ENCODE measurements at regions of chr12 and their contacts with region 1.

Region 1: DNA sequence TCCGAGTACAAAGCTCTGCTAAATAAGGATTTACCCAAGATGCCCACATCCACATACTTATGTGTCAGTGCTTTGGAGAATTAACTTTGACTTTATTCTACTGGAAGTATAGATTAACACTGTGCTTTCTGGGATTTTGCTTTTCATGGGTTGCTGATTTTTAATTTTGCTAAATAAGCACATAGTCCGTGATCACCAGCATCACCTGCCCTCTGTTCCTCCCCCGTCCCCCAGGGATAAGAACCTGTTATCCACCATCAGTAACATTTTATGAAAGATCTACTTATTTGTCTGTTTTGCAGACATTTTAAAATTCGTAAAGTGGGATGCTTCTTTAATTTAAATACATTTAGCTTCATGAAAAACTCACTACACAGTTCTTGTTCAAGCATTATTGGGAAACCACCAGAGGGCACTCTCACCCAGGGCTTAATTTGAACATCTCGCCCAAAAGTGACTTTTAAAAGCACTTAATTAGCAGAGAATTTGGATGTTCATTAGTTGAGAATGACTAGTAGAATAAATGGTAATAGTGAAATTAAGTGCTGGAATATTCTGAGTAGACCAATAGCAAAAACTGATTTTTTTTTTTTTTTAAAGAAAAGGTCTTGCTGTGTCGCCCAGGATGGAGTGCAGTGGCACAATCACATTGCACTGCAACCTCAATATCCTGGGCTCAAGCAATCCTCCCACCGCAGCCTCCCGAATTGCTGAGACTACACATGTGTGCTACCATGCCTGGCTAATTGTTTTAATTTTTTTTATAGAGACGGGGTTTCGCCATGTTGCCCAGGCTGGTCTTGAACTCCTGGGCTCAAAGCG is 35.7 kb downstream of the MRPL42 start:
- DNase-seq: peak in 3 of 5 donors; percentile 48 to 67 (median 49)
- H3K4me3 ChIP-seq: no peak overlapping the region
- H3K27ac ChIP-seq: no peak overlapping the region
- H3K4me1 ChIP-seq: no peaks in the 10 kb centered on the region
- H3K27me3 ChIP-seq: no peaks in the 10 kb centered on the region
- CTCF ChIP-seq: peak; percentile 68

Region 2: DNA sequence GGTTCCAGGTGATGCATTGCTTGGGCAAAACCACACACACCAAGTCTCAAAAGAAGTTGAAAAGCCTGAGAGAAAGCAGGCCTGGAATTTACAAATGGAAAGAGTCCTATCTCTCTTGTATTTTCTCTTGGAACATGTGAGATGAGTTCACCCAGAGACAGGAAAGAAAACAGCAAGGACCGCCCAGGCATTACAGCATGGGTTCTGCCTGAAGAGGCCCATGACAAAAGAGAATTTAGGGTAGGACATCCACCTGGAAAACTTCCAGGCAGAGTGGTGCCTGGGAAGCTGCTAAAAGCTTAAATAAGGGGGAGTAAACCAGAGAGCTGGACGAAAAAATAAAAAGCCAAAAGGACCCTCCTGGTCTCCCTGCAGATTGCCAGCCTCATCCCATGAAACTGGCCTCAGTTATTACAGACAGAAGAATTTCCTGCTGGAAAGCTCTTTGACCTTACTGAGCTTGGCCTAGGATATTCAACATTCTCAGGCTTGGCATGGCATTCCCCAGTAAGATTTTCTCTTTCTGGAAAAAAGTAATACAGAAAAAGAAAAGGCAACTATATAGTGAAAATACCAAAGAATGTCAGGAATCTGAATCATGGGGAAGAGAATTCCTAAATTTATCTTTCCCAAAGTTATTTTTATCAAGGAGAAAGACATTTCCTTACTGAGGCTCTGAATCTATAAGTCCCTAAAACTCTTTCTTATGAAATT is 246.6 kb before region 1 on chr12:
- intact Hi-C with region 1: no loop called
- DNase-seq: peak in 2 of 5 donors; percentile 20 to 50
- H3K4me3 ChIP-seq: no peak overlapping the region
- H3K27ac ChIP-seq: no peak overlapping the region
- H3K4me1 ChIP-seq: no peaks in the 10 kb centered on the region
- H3K27me3 ChIP-seq: no peaks in the 10 kb centered on the region
- CTCF ChIP-seq: no peak

Region 3: GRCh38 chr12:93569656-93570551 is 66.9 kb after region 1 on chr12:
- intact Hi-C with region 1: loop called (anchors 10 kb)
- DNase-seq: peak; percentile 92 to 97 (median 93)
- H3K4me3 ChIP-seq: peak overlapping the region; percentile 67 to 81 (median 70)
- H3K27ac ChIP-seq: peak overlapping the region; percentile 98 to 99
- H3K4me1 ChIP-seq: peaks cover 0 to 2% (median 0%) of the 10 kb centered on the region in 3 donors
- H3K27me3 ChIP-seq: no peaks in the 10 kb centered on the region
- CTCF ChIP-seq: peak; percentile 71

Region 4: GRCh38 chr12:93722835-93723538 is 220.0 kb after region 1 on chr12:
- intact Hi-C with region 1: no loop called
- DNase-seq: no peak
- H3K4me3 ChIP-seq: no peak overlapping the region
- H3K27ac ChIP-seq: no peak overlapping the region
- H3K4me1 ChIP-seq: peaks cover 0 to 4% (median 0%) of the 10 kb centered on the region in 3 donors
- H3K27me3 ChIP-seq: no peaks in the 10 kb centered on the region
- CTCF ChIP-seq: no peak

Region 5: DNA sequence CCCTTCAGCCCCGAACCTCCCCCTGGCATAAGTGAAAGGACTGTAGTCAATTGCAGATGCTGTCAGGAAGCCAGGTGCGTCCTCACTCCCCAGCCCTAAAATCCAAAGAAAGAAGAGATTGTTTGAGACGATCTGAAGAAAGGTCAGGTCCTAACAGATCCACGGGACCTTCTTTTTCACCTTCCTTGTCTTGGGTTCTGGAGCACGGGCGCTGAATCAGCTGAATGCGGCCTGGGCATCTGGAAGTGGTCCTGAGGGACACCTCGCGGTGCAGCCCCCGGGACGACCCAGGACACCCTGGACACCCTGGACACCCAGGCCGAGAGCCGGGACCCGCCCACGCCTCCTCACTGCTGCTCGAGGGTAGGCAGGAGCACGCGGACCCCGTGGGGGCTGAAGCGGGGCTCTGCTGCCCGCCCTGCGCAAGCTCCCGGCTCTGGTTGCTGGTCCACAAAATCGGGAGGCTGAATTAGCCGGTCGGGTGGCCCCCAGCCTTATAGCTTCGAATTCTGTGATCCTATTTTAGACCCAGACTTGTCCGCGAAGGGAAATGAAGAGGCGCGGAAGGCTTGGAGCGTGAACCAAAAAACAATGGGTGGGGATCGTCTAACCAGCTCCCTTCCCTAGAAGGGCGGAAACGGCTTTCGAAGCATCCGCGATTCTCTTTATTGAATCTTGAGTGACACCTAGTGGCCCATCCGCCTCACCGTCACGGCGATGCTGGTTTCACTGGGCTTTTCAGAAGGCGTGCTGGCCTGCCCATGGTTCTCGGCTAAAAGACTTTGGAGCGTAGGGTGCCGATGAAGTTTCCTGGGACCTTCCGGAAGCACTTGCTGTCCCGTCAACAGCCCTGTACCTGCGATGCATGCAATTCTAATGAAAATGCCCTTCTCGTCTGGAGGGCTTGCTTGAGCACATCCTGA is 599.0 kb after region 1 on chr12:
- intact Hi-C with region 1: loop called (anchors 5 kb)
- DNase-seq: peak; percentile 84 to 94 (median 91)
- H3K4me3 ChIP-seq: peak overlapping the region; percentile 71 to 79 (median 74)
- H3K27ac ChIP-seq: peak overlapping the region in 1 of 2 donors; percentile 15
- H3K4me1 ChIP-seq: peaks cover 0 to 6% (median 0%) of the 10 kb centered on the region in 3 donors
- H3K27me3 ChIP-seq: no peaks in the 10 kb centered on the region
- CTCF ChIP-seq: peak; percentile 96